Naive thymus-derived CD4-positive, alpha-beta T cell (primary cell): ENCODE measurements at regions of chr2 and their contacts with region 1.

Region 1: DNA sequence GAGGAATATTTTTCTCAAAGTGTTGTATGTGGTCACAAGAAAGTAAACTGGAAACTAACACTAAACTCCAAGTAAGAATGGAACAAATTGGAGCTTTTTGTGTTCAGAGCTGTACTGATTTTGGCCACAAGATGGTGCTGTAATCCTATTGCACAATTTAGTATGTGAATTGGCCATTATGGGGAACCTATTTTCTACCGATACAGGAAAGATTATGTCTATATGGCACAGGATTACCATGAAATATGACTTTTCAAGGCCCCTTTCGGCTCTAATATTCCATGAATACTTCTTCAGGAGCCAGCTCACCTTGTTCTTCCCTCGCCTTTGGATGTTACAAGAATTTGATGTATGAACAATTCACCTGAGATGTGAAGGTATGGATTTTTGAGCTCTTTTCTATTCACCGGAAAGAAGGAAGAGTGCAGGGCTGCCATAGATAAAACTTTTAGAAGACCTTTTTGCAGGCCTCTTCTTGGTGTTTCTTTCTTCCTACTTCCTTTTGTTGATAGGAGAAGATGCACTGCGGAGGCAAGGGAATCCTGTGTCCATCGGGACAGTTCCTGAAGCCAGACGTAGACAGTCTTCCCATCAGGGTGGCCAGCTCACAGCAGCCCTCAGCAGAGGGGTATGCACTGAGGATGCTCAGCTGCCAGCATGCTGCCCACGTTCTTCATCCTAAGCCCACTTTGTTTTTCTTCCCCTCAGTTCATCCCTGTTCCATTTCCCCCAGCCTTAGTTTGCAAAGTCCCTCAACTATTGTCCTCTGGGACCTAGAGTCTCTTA is 13.3 kb downstream of the MRPL44 start:
- DNase-seq: peak in 8 of 9 donors; percentile 27 to 62 (median 54)
- ATAC-seq: peak; percentile 87
- H3K4me3 ChIP-seq: no peak overlapping the region
- H3K4me3 Mint-ChIP-seq: no peak overlapping the region
- H3K27ac ChIP-seq: no peak overlapping the region
- H3K27ac Mint-ChIP-seq: peak overlapping the region in 1 of 9 donors; percentile 28
- H3K4me1 ChIP-seq: no peaks in the 10 kb centered on the region
- H3K4me1 Mint-ChIP-seq: peaks cover 0 to 14% (median 4%) of the 10 kb centered on the region in 7 donors
- H3K27me3 ChIP-seq: no peaks in the 10 kb centered on the region
- H3K27me3 Mint-ChIP-seq: no peaks in the 10 kb centered on the region

Region 2: GRCh38 chr2:223779877-223780276 is 190.7 kb before region 1 on chr2:
- CTCF ChIA-PET with region 1: no interaction called
- POLR2A ChIA-PET with region 1: no interaction called
- intact Hi-C with region 1: loop called in 1 of 2 experiments (anchors 2 kb)
- DNase-seq: peak in 8 of 9 donors; percentile 8 to 36 (median 24)
- ATAC-seq: peak; percentile 80
- H3K4me3 ChIP-seq: no peak overlapping the region
- H3K4me3 Mint-ChIP-seq: no peak overlapping the region
- H3K27ac ChIP-seq: no peak overlapping the region
- H3K27ac Mint-ChIP-seq: no peak overlapping the region
- H3K4me1 ChIP-seq: no peaks in the 10 kb centered on the region
- H3K4me1 Mint-ChIP-seq: peaks cover 0 to 2% (median 0%) of the 10 kb centered on the region in 7 donors
- H3K27me3 ChIP-seq: no peaks in the 10 kb centered on the region
- H3K27me3 Mint-ChIP-seq: no peaks in the 10 kb centered on the region

Region 3: DNA sequence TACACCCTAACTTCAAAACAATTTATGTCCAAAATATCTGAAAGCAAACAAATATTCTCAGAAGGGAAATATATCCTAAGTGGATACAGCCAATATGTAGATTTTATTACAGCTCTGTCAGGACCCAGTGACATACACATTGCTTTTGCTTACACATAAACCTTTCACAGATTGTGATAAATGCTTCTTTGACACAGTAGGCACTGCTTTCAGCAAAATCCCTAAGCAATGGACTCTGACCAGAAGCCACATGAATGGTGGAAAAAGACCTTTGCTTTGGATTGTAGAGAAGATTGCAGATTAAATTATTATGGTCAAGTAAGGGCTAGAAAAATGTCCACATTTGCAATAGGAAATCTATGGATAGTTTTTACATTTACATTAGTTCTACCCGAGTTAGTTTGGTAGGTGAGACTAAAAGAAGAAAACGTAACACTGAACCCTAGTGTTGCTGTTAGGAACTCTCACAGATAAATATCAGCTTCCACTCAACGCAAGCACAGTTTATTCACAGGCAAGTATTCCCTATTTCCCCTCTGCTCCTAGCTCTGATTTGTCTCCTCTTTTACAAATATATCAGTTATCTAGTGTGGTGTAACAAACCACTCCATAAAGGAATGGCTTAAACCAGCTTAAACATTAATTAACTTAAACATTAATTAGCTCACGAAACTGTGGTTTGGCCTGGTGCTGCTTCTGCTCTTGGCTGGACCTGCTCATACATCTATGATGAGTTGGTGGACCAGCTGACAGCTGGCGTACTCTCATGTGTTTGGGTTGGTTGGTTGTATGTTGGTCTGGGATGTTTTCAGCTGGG is 92.2 kb after region 1 on chr2:
- CTCF ChIA-PET with region 1: interaction called, 10 read pairs
- POLR2A ChIA-PET with region 1: no interaction called
- intact Hi-C with region 1: loop called in 1 of 2 experiments (anchors 1 kb)
- DNase-seq: peak in 4 of 9 donors; percentile 5 to 15 (median 13)
- ATAC-seq: no peak
- H3K4me3 ChIP-seq: no peak overlapping the region
- H3K4me3 Mint-ChIP-seq: no peak overlapping the region
- H3K27ac ChIP-seq: no peak overlapping the region
- H3K27ac Mint-ChIP-seq: no peak overlapping the region
- H3K4me1 ChIP-seq: no peaks in the 10 kb centered on the region
- H3K4me1 Mint-ChIP-seq: no peaks in the 10 kb centered on the region
- H3K27me3 ChIP-seq: no peaks in the 10 kb centered on the region
- H3K27me3 Mint-ChIP-seq: peaks cover 0 to 6% (median 0%) of the 10 kb centered on the region in 5 donors

Region 4: DNA sequence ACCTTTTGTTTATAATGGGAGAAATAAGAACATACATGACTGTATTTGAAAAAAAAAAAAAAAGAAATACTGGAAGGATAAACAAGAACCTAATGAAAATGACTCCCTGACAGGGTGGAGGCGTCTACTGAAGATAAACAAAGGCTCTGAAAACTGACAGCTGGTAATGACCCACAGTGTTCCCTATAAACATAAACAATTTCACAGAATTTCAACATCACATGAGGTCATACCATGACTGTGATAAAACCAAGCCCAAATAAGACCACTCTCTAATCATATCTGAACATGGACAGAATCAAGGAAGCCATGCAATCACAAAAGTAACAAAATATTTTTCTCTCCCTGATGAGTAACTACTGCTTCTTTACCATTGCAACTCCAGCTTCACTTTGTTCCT is 272.0 kb after region 1 on chr2:
- CTCF ChIA-PET with region 1: no interaction called
- POLR2A ChIA-PET with region 1: no interaction called
- intact Hi-C with region 1: no loop called
- DNase-seq: no peak
- ATAC-seq: no peak
- H3K4me3 ChIP-seq: no peak overlapping the region
- H3K4me3 Mint-ChIP-seq: no peak overlapping the region
- H3K27ac ChIP-seq: no peak overlapping the region
- H3K27ac Mint-ChIP-seq: no peak overlapping the region
- H3K4me1 ChIP-seq: no peaks in the 10 kb centered on the region
- H3K4me1 Mint-ChIP-seq: no peaks in the 10 kb centered on the region
- H3K27me3 ChIP-seq: peaks cover 0 to 4% of the 10 kb centered on the region in 2 donors
- H3K27me3 Mint-ChIP-seq: peaks cover 10 to 19% (median 18%) of the 10 kb centered on the region in 5 donors

Region 5: DNA sequence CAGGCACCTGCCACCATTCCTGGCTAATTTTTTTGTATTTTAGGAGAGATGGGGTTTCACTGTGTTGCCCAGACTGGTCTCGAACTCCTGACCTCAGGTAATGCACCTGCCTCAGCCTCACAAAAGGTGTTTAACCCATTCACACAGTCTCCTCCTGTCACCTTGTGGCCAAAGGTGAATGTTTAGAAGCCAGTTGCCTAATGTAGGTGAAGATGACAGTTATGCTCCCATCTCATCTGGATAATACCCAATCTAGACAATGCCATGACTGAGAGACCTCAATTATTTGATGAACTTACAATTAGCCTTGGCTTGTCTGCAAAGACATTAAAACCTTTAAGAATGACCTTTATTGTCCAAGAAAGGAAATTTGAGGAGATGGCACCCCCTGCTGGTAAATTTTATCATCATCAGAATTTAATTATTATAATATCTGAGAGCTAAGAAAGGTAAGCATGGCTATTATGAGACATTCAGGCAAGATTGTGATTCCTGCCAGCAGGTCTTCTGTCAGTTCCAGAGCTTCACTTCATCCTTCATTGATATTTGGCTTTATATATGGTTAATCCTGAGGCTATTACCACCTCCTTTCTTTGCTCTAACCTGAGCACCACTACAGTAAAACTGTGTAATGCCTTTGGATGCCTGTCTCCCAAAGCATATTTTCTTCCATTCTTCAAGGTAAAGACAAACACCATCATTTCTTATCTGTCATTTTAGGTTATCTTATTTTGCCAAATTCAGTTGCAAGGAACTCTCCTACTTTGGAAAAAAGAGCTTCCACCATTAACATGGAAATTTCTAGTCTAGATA is 313.8 kb after region 1 on chr2:
- CTCF ChIA-PET with region 1: interaction called, 98 read pairs
- POLR2A ChIA-PET with region 1: no interaction called
- intact Hi-C with region 1: loop called (anchors 1 kb)
- DNase-seq: peak in 6 of 9 donors; percentile 8 to 46 (median 42)
- ATAC-seq: peak; percentile 29
- H3K4me3 ChIP-seq: no peak overlapping the region
- H3K4me3 Mint-ChIP-seq: no peak overlapping the region
- H3K27ac ChIP-seq: no peak overlapping the region
- H3K27ac Mint-ChIP-seq: no peak overlapping the region
- H3K4me1 ChIP-seq: no peaks in the 10 kb centered on the region
- H3K4me1 Mint-ChIP-seq: no peaks in the 10 kb centered on the region
- H3K27me3 ChIP-seq: no peaks in the 10 kb centered on the region
- H3K27me3 Mint-ChIP-seq: peaks cover 32 to 39% (median 37%) of the 10 kb centered on the region in 5 donors

Region 6: DNA sequence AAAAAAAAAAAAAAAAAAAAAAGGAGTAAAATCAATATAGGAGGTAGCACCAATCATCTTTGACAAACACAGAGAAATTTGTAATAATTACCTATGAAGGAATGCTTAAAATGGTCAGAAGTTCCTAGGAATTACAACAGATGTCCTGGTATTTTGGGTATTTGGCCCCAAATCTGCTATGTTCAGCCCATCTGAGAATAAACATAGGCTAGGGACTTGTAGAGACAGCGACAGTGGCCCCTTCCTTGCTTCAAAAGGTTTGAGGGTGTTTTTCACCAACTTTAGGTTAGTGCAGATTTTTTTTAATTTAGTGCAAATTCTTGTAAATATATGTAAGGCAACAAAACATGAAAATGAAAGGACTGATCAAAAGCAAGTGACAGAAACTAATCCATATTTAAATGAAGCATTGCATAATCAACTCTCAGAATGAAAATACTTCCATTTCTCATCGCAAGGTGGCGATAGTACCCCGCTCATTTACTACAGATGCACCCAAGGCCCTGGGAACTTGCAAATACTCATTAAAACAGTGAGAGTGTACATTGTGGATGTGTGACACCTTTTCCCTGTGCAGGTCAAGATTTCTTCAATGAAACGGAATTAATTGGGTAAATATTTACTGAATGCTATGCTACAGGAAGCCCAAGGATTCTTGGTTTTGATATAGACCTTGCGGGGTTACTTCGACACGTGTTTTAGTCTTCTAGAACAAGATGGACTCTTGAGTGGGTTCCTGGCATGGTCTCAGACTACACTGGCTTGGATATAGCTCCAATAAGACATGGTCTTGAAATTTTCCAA is 386.8 kb after region 1 on chr2:
- CTCF ChIA-PET with region 1: interaction called, 3 read pairs
- POLR2A ChIA-PET with region 1: no interaction called
- intact Hi-C with region 1: loop called in 1 of 2 experiments (anchors 2 kb)
- DNase-seq: peak; percentile 19 to 68 (median 59)
- ATAC-seq: peak; percentile 82
- H3K4me3 ChIP-seq: no peak overlapping the region
- H3K4me3 Mint-ChIP-seq: no peak overlapping the region
- H3K27ac ChIP-seq: no peak overlapping the region
- H3K27ac Mint-ChIP-seq: no peak overlapping the region
- H3K4me1 ChIP-seq: no peaks in the 10 kb centered on the region
- H3K4me1 Mint-ChIP-seq: peaks cover 0 to 2% (median 0%) of the 10 kb centered on the region in 7 donors
- H3K27me3 ChIP-seq: no peaks in the 10 kb centered on the region
- H3K27me3 Mint-ChIP-seq: peaks cover 8 to 20% (median 9%) of the 10 kb centered on the region in 5 donors

Region 7: GRCh38 chr2:224369028-224369632 is 398.6 kb after region 1 on chr2:
- CTCF ChIA-PET with region 1: interaction called, 6 read pairs
- POLR2A ChIA-PET with region 1: no interaction called
- intact Hi-C with region 1: loop called (anchors 1 kb)
- DNase-seq: peak in 7 of 9 donors; percentile 7 to 38 (median 25)
- ATAC-seq: peak; percentile 61
- H3K4me3 ChIP-seq: no peak overlapping the region
- H3K4me3 Mint-ChIP-seq: no peak overlapping the region
- H3K27ac ChIP-seq: no peak overlapping the region
- H3K27ac Mint-ChIP-seq: no peak overlapping the region
- H3K4me1 ChIP-seq: no peaks in the 10 kb centered on the region
- H3K4me1 Mint-ChIP-seq: peaks cover 0 to 4% (median 0%) of the 10 kb centered on the region in 7 donors
- H3K27me3 ChIP-seq: peaks cover 0 to under 1% of the 10 kb centered on the region in 2 donors
- H3K27me3 Mint-ChIP-seq: peaks cover 0 to 8% (median 3%) of the 10 kb centered on the region in 5 donors

Region 8: GRCh38 chr2:224723586-224724217 is 753.2 kb after region 1 on chr2:
- CTCF ChIA-PET with region 1: no interaction called
- POLR2A ChIA-PET with region 1: no interaction called
- intact Hi-C with region 1: no loop called
- DNase-seq: no peak
- ATAC-seq: no peak
- H3K4me3 ChIP-seq: no peak overlapping the region
- H3K4me3 Mint-ChIP-seq: no peak overlapping the region
- H3K27ac ChIP-seq: no peak overlapping the region
- H3K27ac Mint-ChIP-seq: no peak overlapping the region
- H3K4me1 ChIP-seq: no peaks in the 10 kb centered on the region
- H3K4me1 Mint-ChIP-seq: no peaks in the 10 kb centered on the region
- H3K27me3 ChIP-seq: no peaks in the 10 kb centered on the region
- H3K27me3 Mint-ChIP-seq: peaks cover 0 to 13% (median 3%) of the 10 kb centered on the region in 5 donors

Region 9: DNA sequence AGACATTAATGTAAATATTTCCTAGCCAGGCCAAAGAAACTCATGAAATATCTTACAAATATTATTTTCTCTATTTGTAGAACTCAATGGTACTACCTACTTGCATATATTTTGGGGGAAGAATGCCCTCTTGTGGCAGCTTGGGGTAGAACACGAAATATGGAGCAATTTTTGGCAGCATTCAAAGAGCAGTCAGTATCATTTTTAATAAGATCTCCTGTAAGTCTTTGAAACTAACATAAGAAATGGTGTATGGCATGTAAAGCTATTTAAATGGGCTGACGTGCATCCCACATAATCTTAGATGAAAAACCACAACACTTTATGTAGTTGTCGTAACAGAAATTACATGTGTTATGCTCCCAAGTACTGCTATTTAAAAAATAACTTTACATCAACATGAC is 807.9 kb after region 1 on chr2:
- CTCF ChIA-PET with region 1: interaction called, 3 read pairs
- POLR2A ChIA-PET with region 1: no interaction called
- intact Hi-C with region 1: loop called in 1 of 2 experiments (anchors 5 kb)
- DNase-seq: peak; percentile 18 to 68 (median 58)
- ATAC-seq: peak; percentile 80
- H3K4me3 ChIP-seq: no peak overlapping the region
- H3K4me3 Mint-ChIP-seq: no peak overlapping the region
- H3K27ac ChIP-seq: no peak overlapping the region
- H3K27ac Mint-ChIP-seq: peak overlapping the region in 5 of 9 donors; percentile 10 to 54 (median 43)
- H3K4me1 ChIP-seq: no peaks in the 10 kb centered on the region
- H3K4me1 Mint-ChIP-seq: peaks cover 0 to 22% (median 11%) of the 10 kb centered on the region in 7 donors
- H3K27me3 ChIP-seq: no peaks in the 10 kb centered on the region
- H3K27me3 Mint-ChIP-seq: no peaks in the 10 kb centered on the region